MCF 10A (cell line): ENCODE measurements at regions of chr4 and their contacts with region 1.

Region 1: DNA sequence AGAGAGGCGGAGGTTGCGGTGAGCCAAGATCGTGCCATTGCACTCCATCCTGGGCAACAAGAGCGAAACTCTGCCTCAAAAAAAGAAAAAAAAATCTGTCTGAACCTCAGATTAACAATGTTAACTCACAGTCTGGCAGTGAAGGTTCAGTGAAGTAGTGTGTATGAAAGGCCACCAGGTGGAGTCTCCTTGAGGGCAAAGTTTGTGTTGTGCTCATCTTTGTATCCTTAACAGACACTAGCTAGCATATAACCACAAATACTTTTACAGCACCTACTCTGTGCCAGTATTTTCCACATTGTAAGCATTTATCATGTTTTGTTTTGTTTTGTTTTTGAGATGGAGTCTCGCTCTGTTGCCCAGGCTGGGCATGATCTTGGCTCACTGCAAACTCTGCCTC is 46.0 kb upstream of the MGST2 start:
- DNase-seq: peak; percentile 56
- H3K4me3 Mint-ChIP-seq: no peak overlapping the region
- H3K27ac Mint-ChIP-seq: no peak overlapping the region
- H3K4me1 Mint-ChIP-seq: no peaks in the 10 kb centered on the region
- H3K27me3 Mint-ChIP-seq: no peaks in the 10 kb centered on the region
- CTCF ChIP-seq: peak; percentile 32

Region 2: DNA sequence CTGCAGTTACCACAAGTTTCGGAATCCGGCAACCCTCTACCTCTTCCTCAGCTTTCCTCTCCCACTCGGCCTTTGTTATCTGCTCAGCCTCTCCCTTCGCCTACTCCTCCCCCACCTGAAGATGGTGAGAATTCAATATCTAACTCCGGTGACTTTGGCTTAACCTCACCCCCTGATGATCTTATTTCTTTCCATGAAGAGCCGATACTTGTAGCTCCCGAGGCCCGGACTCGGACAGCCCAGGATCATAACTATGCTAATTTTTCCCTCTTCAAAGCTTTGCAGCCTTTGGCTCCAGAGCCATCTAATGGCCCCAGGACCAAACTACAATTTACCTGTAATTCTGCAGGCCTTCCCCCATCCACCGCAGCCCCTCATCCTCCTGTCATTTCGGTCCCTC is 14.0 kb after region 1 on chr4:
- CTCF ChIA-PET with region 1: interaction called, 16 read pairs
- POLR2A ChIA-PET with region 1: no interaction called
- intact Hi-C with region 1: no loop called
- DNase-seq: peak; percentile 55
- H3K4me3 Mint-ChIP-seq: no peak overlapping the region
- H3K27ac Mint-ChIP-seq: peak overlapping the region; percentile 20
- H3K4me1 Mint-ChIP-seq: peaks cover 10% of the 10 kb centered on the region
- H3K27me3 Mint-ChIP-seq: no peaks in the 10 kb centered on the region
- CTCF ChIP-seq: peak; percentile 55